ENCODE measurements at regions of chr3 and their contacts with region 1.

Region 1: DNA sequence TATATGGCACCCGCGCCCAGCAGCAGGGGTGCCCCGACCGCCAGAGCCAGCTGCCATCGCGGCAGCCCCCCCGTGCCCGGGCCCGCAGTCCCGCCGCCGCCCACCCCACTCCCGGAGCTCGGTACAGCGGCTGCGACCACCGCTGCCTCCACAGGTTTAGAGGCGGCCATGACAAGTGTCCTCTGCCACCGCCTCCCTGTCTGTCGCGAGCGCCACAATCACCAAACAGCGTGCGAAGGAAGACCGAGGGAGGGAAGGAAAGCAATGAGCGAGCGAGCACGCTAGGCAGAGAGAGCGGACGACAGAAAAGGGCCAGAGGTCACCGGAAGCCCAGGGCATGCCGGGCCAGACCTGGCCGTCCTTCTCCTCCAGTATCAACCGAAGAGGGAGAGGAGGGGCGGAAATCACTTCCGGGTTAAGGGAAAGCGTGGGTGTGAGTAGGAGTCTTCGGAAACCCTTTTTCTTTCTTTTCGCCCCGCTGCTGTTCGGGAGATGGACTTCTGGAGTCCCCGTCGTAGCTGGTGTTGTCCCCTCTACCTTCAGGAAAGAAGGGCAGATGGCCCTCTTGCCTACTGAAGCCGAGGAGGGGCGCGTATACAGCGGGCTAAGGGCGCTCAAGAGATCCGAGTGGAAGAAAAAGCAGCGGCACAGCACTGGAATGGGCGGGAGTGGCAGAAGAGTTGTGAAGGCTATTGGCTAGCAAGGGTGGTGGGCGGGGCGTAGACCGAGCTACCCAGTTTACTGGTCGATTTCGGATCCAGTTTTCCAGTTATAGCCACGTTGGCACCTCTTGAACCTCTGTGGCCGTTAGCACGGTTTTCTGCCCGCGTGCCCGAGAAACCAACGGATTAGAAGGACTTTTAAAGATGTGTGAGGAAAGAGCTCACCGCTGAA is at the starts of genes LNP1 and TOMM70:
- DNase-seq: peak; percentile 98
- ATAC-seq: peak; percentile 91
- H3K4me3 Mint-ChIP-seq: peak within 1 kb of the TSS; percentile 78
- H3K27ac Mint-ChIP-seq: peak within 1 kb of the TSS; percentile 96
- H3K4me1 Mint-ChIP-seq: peaks cover 51% of the 10 kb centered on the region
- H3K27me3 Mint-ChIP-seq: no peaks in the 10 kb centered on the region
- total RNA-seq, gene LNP1: 1.7 TPM
- total RNA-seq, gene TOMM70: 54.0 to 54.1 TPM

Region 2: GRCh38 chr3:98901392-98902350 is 1499.4 kb before region 1 on chr3 and contains the start of gene DCBLD2:
- CTCF ChIA-PET with region 1: no interaction called
- POLR2A ChIA-PET with region 1: no interaction called
- intact Hi-C with region 1: loop called in 1 of 2 experiments (anchors 5 kb)
- DNase-seq: peak; percentile 96
- ATAC-seq: peak; percentile 100
- H3K4me3 Mint-ChIP-seq: peak within 1 kb of the TSS; percentile 80
- H3K27ac Mint-ChIP-seq: peak within 1 kb of the TSS; percentile 69
- H3K4me1 Mint-ChIP-seq: peaks cover 16% of the 10 kb centered on the region
- H3K27me3 Mint-ChIP-seq: peaks cover 5% of the 10 kb centered on the region
- total RNA-seq, gene DCBLD2: 1.9 to 2.5 TPM

Region 3: GRCh38 chr3:99833617-99834205 is 567.3 kb before region 1 on chr3:
- CTCF ChIA-PET with region 1: interaction called, 4 read pairs
- POLR2A ChIA-PET with region 1: no interaction called
- intact Hi-C with region 1: loop called in 1 of 2 experiments (anchors 5 kb)
- DNase-seq: no peak
- ATAC-seq: no peak
- H3K4me3 Mint-ChIP-seq: no peak overlapping the region
- H3K27ac Mint-ChIP-seq: no peak overlapping the region
- H3K4me1 Mint-ChIP-seq: peaks cover 8% of the 10 kb centered on the region
- H3K27me3 Mint-ChIP-seq: no peaks in the 10 kb centered on the region

Region 4: GRCh38 chr3:100269410-100270217 is 131.4 kb before region 1 on chr3:
- CTCF ChIA-PET with region 1: no interaction called
- POLR2A ChIA-PET with region 1: no interaction called
- intact Hi-C with region 1: loop called in 1 of 2 experiments (anchors 2 kb)
- DNase-seq: peak; percentile 34
- ATAC-seq: peak; percentile 87
- H3K4me3 Mint-ChIP-seq: no peak overlapping the region
- H3K27ac Mint-ChIP-seq: peak overlapping the region; percentile 15
- H3K4me1 Mint-ChIP-seq: peaks cover 41% of the 10 kb centered on the region
- H3K27me3 Mint-ChIP-seq: no peaks in the 10 kb centered on the region

Region 5: DNA sequence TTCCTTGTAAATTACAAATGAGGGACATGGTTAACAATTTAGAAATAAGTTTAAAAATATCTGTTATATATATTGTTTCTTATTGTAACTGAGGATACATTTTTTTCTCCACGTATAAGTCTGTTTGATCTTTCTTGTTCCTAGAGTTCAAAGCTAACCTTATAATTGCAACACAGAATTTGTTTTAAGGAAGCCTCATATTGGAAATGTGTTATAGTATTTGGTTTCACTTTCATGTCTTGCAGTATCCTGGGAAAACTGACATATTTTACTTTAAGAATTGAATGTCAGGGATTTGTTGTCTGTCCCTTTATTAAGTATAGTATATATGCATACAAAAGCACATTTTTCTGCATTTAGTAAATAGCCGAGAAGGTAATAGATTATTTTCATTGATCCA is 90.0 kb before region 1 on chr3:
- CTCF ChIA-PET with region 1: no interaction called
- POLR2A ChIA-PET with region 1: no interaction called
- intact Hi-C with region 1: no loop called
- DNase-seq: no peak
- ATAC-seq: no peak
- H3K4me3 Mint-ChIP-seq: no peak overlapping the region
- H3K27ac Mint-ChIP-seq: no peak overlapping the region
- H3K4me1 Mint-ChIP-seq: no peaks in the 10 kb centered on the region
- H3K27me3 Mint-ChIP-seq: no peaks in the 10 kb centered on the region

Region 6: GRCh38 chr3:100386437-100387074 is 14.5 kb before region 1 on chr3:
- CTCF ChIA-PET with region 1: interaction called, 12 read pairs
- POLR2A ChIA-PET with region 1: interaction called, 6 read pairs
- intact Hi-C with region 1: no loop called
- DNase-seq: no peak
- ATAC-seq: no peak
- H3K4me3 Mint-ChIP-seq: no peak overlapping the region
- H3K27ac Mint-ChIP-seq: no peak overlapping the region
- H3K4me1 Mint-ChIP-seq: peaks cover 16% of the 10 kb centered on the region
- H3K27me3 Mint-ChIP-seq: no peaks in the 10 kb centered on the region

Region 7: GRCh38 chr3:100590114-100590839 is 189.2 kb after region 1 on chr3:
- CTCF ChIA-PET with region 1: interaction called, 5 read pairs
- POLR2A ChIA-PET with region 1: no interaction called
- intact Hi-C with region 1: loop called in 1 of 2 experiments (anchors 1 kb)
- DNase-seq: peak; percentile 72
- ATAC-seq: peak; percentile 87
- H3K4me3 Mint-ChIP-seq: no peak overlapping the region
- H3K27ac Mint-ChIP-seq: no peak overlapping the region
- H3K4me1 Mint-ChIP-seq: peaks cover 3% of the 10 kb centered on the region
- H3K27me3 Mint-ChIP-seq: no peaks in the 10 kb centered on the region

Region 8: DNA sequence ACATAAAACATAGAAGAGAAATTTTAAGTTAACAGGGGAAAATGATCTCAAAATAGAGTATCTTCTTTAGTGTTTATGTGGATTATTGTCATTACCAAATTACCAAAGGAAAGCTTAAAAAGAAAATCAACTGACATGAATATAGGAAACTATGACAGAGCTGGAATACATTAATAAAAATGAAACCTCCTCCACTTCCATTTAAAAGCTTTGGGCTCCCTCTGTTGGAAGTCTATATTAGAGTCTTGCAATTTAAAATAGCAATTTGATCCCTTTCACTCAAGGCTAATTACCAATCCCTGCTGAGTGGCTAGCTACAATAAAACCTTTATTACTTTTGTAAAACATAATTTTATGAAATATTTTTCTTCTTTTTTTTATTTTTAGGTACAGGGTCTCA is 980.8 kb after region 1 on chr3:
- CTCF ChIA-PET with region 1: no interaction called
- POLR2A ChIA-PET with region 1: no interaction called
- intact Hi-C with region 1: loop called in 1 of 2 experiments (anchors 10 kb)
- DNase-seq: no peak
- ATAC-seq: no peak
- H3K4me3 Mint-ChIP-seq: no peak overlapping the region
- H3K27ac Mint-ChIP-seq: no peak overlapping the region
- H3K4me1 Mint-ChIP-seq: peaks cover 60% of the 10 kb centered on the region
- H3K27me3 Mint-ChIP-seq: no peaks in the 10 kb centered on the region